Caco-2 (cell line): ENCODE measurements at regions of chr3 and their contacts with region 1.

Region 1: GRCh38 chr3:153161138-153161713 is 800 bp upstream of the RAP2B start:
- DNase-seq: peak; percentile 94 to 98
- H3K4me3 ChIP-seq: peak overlapping the region; percentile 82
- H3K4me3 Mint-ChIP-seq: peak overlapping the region; percentile 93
- H3K27ac Mint-ChIP-seq: peak overlapping the region; percentile 89
- H3K4me1 ChIP-seq: peaks cover 36% of the 10 kb centered on the region
- H3K4me1 Mint-ChIP-seq: peaks cover 14% of the 10 kb centered on the region
- H3K27me3 ChIP-seq: no peaks in the 10 kb centered on the region
- H3K27me3 Mint-ChIP-seq: no peaks in the 10 kb centered on the region
- CTCF ChIP-seq: no peak

Region 2: GRCh38 chr3:153043729-153044328 is 117.4 kb before region 1 on chr3:
- CTCF ChIA-PET with region 1: interaction called, 16 read pairs
- POLR2A ChIA-PET with region 1: interaction called, 4 read pairs
- intact Hi-C with region 1: loop called (anchors 1 kb)
- DNase-seq: no peak
- H3K4me3 ChIP-seq: no peak overlapping the region
- H3K4me3 Mint-ChIP-seq: peak overlapping the region; percentile 39
- H3K27ac Mint-ChIP-seq: peak overlapping the region; percentile 34
- H3K4me1 ChIP-seq: no peaks in the 10 kb centered on the region
- H3K4me1 Mint-ChIP-seq: peaks cover 6% of the 10 kb centered on the region
- H3K27me3 ChIP-seq: no peaks in the 10 kb centered on the region
- H3K27me3 Mint-ChIP-seq: no peaks in the 10 kb centered on the region
- CTCF ChIP-seq: no peak

Region 3: GRCh38 chr3:153103406-153103945 is 57.8 kb before region 1 on chr3:
- CTCF ChIA-PET with region 1: no interaction called
- POLR2A ChIA-PET with region 1: no interaction called
- intact Hi-C with region 1: loop called (anchors 5 kb)
- DNase-seq: no peak
- H3K4me3 ChIP-seq: no peak overlapping the region
- H3K4me3 Mint-ChIP-seq: no peak overlapping the region
- H3K27ac Mint-ChIP-seq: no peak overlapping the region
- H3K4me1 ChIP-seq: peaks cover 10% of the 10 kb centered on the region
- H3K4me1 Mint-ChIP-seq: no peaks in the 10 kb centered on the region
- H3K27me3 ChIP-seq: no peaks in the 10 kb centered on the region
- H3K27me3 Mint-ChIP-seq: no peaks in the 10 kb centered on the region
- CTCF ChIP-seq: no peak

Region 4: DNA sequence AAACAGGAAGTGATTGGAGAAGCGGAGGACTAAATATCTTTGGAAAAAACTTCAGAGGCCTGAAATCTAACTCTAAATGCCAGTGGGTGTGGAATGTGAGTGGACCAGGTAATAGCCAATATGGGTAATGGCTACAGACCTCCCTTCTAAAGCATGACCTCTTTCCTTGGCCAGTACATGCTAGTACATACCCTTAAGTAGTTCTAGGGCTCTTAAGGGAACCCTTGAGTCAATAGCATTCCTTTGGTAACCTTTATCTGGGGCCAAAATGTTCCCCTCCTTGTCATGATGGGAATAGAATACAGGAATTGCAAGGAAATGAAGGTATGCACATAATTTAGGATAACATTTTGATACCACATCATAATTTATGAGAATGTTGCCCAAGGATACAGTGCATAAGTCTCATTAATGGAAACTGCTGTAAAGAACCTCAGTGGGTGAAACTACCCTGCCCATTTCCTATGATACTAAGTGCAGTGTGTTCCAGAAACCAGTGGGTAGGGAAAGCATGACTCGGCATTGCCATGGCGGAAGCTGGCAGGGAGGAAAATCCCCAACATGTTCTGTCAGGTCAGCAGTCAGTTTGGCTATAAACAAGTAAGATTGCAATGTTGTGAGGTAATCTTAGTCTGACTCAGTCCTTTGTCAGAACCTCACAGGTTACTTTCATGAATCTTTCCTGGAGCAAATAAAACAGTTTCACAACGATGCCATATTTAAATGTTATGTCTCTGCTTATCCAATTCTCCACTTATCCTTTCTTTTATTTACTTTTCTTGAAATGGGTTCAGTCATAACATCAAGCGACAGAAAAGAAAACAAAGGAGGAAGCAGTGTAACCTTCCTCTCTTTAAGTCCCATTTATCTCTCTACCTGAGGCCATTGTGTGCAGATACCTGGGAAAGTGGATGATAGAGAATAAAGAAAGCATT is 22.7 kb before region 1 on chr3:
- CTCF ChIA-PET with region 1: no interaction called
- POLR2A ChIA-PET with region 1: no interaction called
- intact Hi-C with region 1: loop called (anchors 1 kb)
- DNase-seq: peak; percentile 61 to 65
- H3K4me3 ChIP-seq: no peak overlapping the region
- H3K4me3 Mint-ChIP-seq: no peak overlapping the region
- H3K27ac Mint-ChIP-seq: peak overlapping the region; percentile 91
- H3K4me1 ChIP-seq: peaks cover 25% of the 10 kb centered on the region
- H3K4me1 Mint-ChIP-seq: no peaks in the 10 kb centered on the region
- H3K27me3 ChIP-seq: no peaks in the 10 kb centered on the region
- H3K27me3 Mint-ChIP-seq: no peaks in the 10 kb centered on the region
- CTCF ChIP-seq: no peak

Region 5: DNA sequence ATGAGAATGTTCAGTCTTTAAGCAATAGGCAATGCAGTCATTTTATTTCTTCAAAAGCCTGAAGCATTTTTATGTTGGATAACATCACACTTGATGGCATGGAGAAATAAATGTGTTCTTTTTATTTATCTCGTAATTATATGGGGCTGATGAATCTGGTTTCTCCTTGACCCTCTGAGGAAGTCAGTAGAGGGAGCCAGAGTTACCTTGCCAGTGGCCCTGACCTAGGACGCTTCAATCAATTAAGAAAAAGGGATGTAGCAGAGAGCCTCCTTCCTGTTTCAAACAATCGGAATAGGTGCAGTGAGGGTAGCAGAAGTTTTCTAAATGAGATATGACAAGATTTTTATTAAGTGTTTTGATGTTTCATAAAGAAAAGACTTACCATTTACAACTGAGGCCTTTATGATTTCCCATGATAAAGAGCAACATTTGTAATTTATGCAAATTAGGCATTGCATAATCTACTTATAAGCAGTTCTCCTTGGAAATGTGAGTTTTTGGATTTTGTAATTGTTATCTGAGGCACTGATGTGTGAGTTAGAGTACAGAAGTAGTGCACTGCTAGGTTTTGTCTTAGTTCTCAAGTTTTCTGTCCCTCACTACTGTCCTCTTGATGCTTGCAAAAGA is 129.9 kb after region 1 on chr3:
- CTCF ChIA-PET with region 1: interaction called, 6 read pairs
- POLR2A ChIA-PET with region 1: interaction called, 3 read pairs
- intact Hi-C with region 1: loop called (anchors 1 kb)
- DNase-seq: peak in 1 of 2 experiments; percentile 29
- H3K4me3 ChIP-seq: no peak overlapping the region
- H3K4me3 Mint-ChIP-seq: no peak overlapping the region
- H3K27ac Mint-ChIP-seq: no peak overlapping the region
- H3K4me1 ChIP-seq: no peaks in the 10 kb centered on the region
- H3K4me1 Mint-ChIP-seq: no peaks in the 10 kb centered on the region
- H3K27me3 ChIP-seq: no peaks in the 10 kb centered on the region
- H3K27me3 Mint-ChIP-seq: no peaks in the 10 kb centered on the region
- CTCF ChIP-seq: peak; percentile 51 to 63

Region 6: DNA sequence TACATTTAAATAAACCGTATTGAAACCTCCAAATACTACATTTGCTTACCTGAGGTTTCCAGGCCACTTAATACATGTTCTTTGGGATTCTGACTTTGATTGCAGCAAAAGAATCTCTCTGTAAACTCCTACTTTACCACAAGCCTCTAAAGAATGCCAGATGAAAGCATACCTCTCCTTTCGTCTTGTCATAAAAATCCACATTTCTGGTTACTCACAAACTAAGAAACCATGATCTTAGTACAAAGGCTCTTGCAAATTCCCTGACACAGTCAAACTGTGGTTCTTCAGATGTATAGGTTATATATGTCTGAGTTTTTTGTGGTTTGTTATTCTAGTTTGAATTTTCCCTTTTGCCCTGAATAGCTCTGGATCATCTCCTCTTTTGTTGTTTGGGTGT is 189.2 kb after region 1 on chr3:
- CTCF ChIA-PET with region 1: no interaction called
- POLR2A ChIA-PET with region 1: no interaction called
- intact Hi-C with region 1: loop called (anchors 5 kb)
- DNase-seq: peak in 1 of 2 experiments; percentile 66
- H3K4me3 ChIP-seq: no peak overlapping the region
- H3K4me3 Mint-ChIP-seq: peak overlapping the region; percentile 60
- H3K27ac Mint-ChIP-seq: peak overlapping the region; percentile 94
- H3K4me1 ChIP-seq: peaks cover 39% of the 10 kb centered on the region
- H3K4me1 Mint-ChIP-seq: peaks cover 29% of the 10 kb centered on the region
- H3K27me3 ChIP-seq: no peaks in the 10 kb centered on the region
- H3K27me3 Mint-ChIP-seq: no peaks in the 10 kb centered on the region
- CTCF ChIP-seq: no peak

Region 7: DNA sequence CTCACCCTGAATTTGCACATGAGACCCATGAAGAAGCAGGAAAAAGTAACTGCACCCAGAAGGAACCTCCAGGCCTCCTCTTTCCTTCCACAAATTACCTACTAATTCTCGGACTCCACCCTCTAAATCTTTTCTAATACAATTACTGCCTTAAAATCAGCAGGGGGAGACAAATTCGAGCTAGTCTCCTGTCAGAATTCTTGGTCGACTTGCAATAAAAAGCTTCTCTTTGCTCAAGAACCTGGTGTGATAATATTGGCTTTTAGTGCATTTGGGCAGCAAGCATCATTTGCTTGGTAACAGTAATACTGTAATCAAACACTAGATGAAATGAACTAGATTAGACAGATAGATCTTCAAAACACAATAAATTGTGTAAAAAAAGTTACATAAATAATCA is 282.7 kb after region 1 on chr3:
- CTCF ChIA-PET with region 1: no interaction called
- POLR2A ChIA-PET with region 1: no interaction called
- intact Hi-C with region 1: loop called (anchors 10 kb)
- DNase-seq: peak in 1 of 2 experiments; percentile 15
- H3K4me3 ChIP-seq: no peak overlapping the region
- H3K4me3 Mint-ChIP-seq: no peak overlapping the region
- H3K27ac Mint-ChIP-seq: no peak overlapping the region
- H3K4me1 ChIP-seq: no peaks in the 10 kb centered on the region
- H3K4me1 Mint-ChIP-seq: peaks cover 5% of the 10 kb centered on the region
- H3K27me3 ChIP-seq: no peaks in the 10 kb centered on the region
- H3K27me3 Mint-ChIP-seq: no peaks in the 10 kb centered on the region
- CTCF ChIP-seq: peak; percentile 20 to 33